ENCODE measurements at regions of chr2 and their contacts with region 1.

Region 1: GRCh38 chr2:37357530-37357929 is 13.1 kb downstream of the QPCT start:
- DNase-seq: no peak
- H3K4me3 ChIP-seq: no peak overlapping the region
- H3K27me3 ChIP-seq: no peaks in the 10 kb centered on the region
- CTCF ChIP-seq: no peak

Region 2: GRCh38 chr2:37274359-37274965 is 83.1 kb before region 1 on chr2:
- CTCF ChIA-PET with region 1: no interaction called
- POLR2A ChIA-PET with region 1: no interaction called
- DNase-seq: no peak
- H3K4me3 ChIP-seq: no peak overlapping the region
- H3K27me3 ChIP-seq: no peaks in the 10 kb centered on the region
- CTCF ChIP-seq: no peak

Region 3: DNA sequence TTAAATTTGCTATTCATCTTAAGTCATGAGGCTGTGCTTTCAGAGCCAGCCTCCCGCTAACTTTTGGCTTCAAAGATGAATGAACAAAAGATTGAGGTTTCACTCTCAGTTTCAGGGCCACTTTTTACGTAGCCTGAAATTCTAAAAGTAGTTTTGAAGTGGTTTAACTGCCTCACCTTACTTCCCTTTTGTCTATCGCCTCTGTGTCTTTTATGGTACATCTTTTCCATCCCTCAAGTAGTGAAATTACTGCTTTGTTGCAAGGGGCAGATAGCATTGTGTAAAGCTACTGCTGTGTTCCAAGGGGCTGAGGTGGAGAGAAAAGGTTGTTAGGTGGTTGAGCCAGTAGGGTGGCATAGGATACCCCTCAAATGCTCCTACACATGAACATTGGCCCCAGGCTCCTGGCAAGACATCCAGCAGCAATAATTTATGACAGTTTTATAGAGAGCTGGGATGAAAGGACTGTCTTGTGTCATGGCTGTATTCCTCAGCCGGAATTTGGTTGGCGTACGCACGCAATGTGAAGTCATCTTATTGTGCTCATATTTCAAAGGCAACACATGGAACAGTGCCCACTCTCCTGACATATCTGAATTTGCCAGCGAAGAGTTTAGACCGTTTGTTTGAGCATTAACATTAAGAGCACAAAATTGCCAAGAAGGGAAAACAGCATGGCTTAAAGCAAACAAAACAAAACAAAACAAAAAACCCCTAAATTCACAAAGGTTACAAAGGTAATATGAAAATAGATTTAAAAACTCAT is 19.1 kb after region 1 on chr2:
- CTCF ChIA-PET with region 1: interaction called, 5 read pairs
- POLR2A ChIA-PET with region 1: interaction called, 11 read pairs
- DNase-seq: no peak
- H3K4me3 ChIP-seq: no peak overlapping the region
- H3K27me3 ChIP-seq: no peaks in the 10 kb centered on the region
- CTCF ChIP-seq: no peak

Measured in BJ (cell line).